ENCODE measurements at regions of chr10 and their contacts with region 1.

Region 1: GRCh38 chr10:95374597-95375209 is 83.9 kb upstream of the PDLIM1 start:
- DNase-seq: peak; percentile 80 to 89 (median 86)
- ATAC-seq: peak; percentile 88 to 91
- H3K4me3 ChIP-seq: no peak overlapping the region
- H3K27ac ChIP-seq: no peak overlapping the region
- H3K4me1 ChIP-seq: peaks cover 6% of the 10 kb centered on the region
- H3K27me3 ChIP-seq: no peaks in the 10 kb centered on the region

Region 2: DNA sequence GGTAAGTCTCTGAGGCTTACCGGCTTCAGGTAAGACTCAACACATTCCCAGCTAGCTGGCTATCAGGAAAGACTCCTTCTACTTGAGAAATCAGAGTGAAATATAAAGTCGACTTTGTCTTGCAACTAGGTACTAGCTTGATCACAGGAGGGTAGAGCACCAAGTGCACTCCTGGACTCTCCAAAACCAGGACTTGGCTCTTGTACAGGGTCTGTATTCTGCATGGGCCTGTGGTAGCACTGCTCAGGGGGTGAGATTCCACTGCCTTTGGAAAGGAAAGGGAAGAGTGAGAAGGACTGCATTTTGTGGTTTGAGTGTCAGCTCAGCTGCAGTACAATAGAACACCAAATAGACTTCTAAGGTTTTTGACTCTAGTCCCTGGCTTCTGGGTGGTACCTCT is 324.8 kb before region 1 on chr10:
- intact Hi-C with region 1: no loop called
- DNase-seq: no peak
- ATAC-seq: no peak
- H3K4me3 ChIP-seq: no peak overlapping the region
- H3K27ac ChIP-seq: no peak overlapping the region
- H3K4me1 ChIP-seq: no peaks in the 10 kb centered on the region
- H3K27me3 ChIP-seq: no peaks in the 10 kb centered on the region

Region 3: GRCh38 chr10:95423164-95424005 is 48.7 kb after region 1 on chr10:
- intact Hi-C with region 1: loop called in 2 of 4 experiments (anchors 10 kb)
- DNase-seq: no peak
- ATAC-seq: no peak
- H3K4me3 ChIP-seq: no peak overlapping the region
- H3K27ac ChIP-seq: peak overlapping the region; percentile 30
- H3K4me1 ChIP-seq: peaks cover 9% of the 10 kb centered on the region
- H3K27me3 ChIP-seq: no peaks in the 10 kb centered on the region

Region 4: DNA sequence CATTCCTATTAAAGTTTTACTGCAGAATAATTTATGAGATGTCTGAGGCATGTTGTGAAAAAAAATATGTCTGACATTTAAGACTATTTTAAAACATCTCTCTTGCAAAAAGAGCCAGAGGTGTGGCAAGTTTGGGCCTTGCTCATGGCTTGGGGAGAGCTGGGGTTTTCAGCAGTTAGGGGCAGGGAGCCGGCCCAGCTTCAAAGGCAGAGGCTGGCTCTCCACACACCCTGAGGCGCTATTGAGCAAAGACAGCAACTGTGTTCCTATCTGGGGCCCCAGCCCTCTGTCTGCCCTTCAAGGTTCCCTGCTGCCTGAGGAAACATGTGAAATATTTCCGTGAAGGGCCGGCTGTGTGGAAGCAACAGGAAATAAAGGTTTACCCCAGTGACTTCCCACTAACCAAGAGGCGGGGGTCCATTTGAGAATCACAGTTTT is 92.5 kb after region 1 on chr10:
- intact Hi-C with region 1: no loop called
- DNase-seq: peak; percentile 58 to 75 (median 72)
- ATAC-seq: peak; percentile 87 to 93
- H3K4me3 ChIP-seq: no peak overlapping the region
- H3K27ac ChIP-seq: peak overlapping the region; percentile 68
- H3K4me1 ChIP-seq: peaks cover 20% of the 10 kb centered on the region
- H3K27me3 ChIP-seq: no peaks in the 10 kb centered on the region

Region 5: DNA sequence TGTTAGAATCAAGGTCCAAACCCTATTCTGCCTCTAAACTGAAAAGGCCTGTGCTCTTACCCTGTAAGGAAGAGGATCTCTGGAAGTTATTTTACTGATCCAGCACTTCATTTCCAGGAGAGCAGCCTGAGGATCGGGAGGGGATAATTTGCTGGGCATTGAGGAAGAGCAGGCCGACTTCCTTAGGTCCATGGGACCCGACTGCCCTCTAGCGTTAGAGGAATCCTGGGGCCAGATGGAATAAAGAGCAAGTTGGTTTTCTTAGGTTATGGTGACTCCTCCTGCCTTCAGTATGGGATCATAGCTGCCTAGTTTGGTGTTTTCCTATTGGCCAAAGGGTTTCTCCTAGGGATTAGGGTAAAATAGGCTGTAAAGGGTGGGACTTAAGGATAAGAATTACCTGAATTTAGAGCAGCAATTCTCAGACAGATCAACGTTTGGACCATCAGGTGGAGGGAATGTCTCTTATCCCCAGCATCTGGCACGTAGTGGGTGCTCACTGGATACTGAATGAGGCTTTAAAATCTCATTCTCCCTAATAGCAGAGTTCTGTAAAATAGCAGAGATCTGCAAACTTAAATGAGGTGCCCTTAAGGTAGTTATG is 226.5 kb after region 1 on chr10:
- intact Hi-C with region 1: loop called (anchors 1 to 5 kb)
- DNase-seq: peak; percentile 77 to 91 (median 88)
- ATAC-seq: peak; percentile 89 to 90
- H3K4me3 ChIP-seq: no peak overlapping the region
- H3K27ac ChIP-seq: no peak overlapping the region
- H3K4me1 ChIP-seq: peaks cover 9% of the 10 kb centered on the region
- H3K27me3 ChIP-seq: no peaks in the 10 kb centered on the region

Measured in right cardiac atrium (tissue), 5 donors.